ENCODE measurements at regions of chr19 and their contacts with region 1.

Region 1: DNA sequence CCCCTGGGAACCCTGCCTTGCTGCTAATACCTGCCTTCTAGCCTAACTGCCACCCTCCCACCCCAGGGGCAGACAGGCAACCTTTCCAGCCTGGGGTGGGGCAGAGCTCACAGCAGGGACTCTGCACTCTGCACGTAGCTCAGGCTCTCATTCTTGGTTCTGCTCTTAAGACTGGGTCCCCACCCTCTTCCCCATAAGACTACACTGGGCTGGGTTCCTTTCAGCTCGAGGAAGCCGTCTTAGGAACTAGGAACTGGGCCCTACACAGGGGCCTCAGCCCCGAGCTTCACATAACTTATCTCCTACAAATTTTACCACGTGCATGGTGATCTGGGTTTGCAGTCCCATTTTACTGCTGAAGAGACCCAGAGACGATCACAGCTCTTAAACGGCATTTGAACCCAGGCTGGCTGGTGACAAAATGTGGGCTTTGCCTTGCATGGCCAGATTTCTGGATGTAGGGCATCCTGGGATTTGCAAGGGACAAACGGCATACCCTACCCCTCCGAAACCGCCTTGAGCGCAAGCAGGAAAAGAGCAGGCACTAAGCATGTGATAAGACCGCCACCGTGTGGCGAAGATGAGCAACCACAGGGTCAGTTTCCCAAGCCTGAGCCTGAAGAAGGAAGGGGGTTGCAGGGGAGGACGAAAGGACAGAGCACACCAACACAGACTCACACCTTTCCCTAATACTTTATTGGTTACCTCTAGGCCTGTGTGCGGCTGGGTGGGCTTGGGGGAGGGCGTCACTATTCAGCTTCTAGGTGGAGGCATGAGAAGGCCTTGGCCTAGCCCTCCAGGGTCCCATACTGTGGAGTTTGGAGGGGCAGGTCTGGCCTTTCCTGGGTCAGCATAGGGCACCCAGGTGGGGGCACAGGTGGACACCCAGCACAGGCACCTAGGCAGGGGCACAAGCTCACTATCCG is 5.1 kb downstream of the JUNB start:
- DNase-seq: peak; percentile 81
- H3K4me3 Mint-ChIP-seq: peak overlapping the region; percentile 64
- H3K27ac Mint-ChIP-seq: peak overlapping the region; percentile 84
- H3K4me1 Mint-ChIP-seq: peaks cover 41% of the 10 kb centered on the region
- H3K27me3 Mint-ChIP-seq: no peaks in the 10 kb centered on the region

Region 2: GRCh38 chr19:12766051-12766521 is 30.3 kb before region 1 on chr19:
- CTCF ChIA-PET with region 1: interaction called, 419 read pairs
- POLR2A ChIA-PET with region 1: interaction called, 574 read pairs
- DNase-seq: peak; percentile 86
- H3K4me3 Mint-ChIP-seq: peak overlapping the region; percentile 24
- H3K27ac Mint-ChIP-seq: no peak overlapping the region
- H3K4me1 Mint-ChIP-seq: peaks cover 16% of the 10 kb centered on the region
- H3K27me3 Mint-ChIP-seq: no peaks in the 10 kb centered on the region

Region 3: DNA sequence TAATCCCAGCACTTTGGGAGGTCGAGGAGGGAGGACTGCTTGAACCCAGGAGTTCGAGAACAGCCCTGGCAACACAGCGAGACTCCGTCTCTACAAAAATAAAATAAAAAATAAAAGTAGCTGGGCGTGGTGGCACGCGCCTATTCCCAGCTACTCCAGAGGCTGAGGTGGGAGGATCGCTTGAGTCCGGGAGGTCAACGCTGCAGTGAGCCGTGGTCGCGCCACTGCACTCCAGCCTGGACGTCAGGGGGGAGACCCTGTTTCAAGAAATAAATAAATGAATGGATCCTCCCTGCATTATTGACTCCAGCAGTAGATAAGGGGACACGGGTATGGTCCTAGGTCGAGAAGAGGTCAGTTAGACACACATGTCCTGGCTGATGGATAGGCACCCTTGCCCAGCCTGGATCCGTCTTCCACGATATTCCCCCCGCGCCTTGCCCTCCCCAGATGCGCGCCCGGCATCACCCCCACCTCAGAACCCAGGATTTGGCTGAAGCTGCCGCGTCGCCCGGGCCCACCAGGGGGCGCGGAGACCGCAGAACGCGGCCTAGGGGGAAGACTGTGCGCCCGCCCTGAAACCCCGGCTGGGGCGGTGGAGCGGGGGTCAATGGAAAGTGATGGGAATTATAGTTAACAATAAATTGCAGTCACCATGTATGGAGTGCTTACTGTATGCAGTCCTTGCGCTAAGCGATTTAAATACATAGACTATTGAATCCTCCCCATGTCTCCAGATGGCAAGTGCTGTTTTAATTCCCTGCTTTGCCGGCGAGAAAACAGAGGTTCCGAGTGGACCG is 19.0 kb before region 1 on chr19:
- CTCF ChIA-PET with region 1: interaction called, 183 read pairs
- POLR2A ChIA-PET with region 1: interaction called, 574 read pairs
- DNase-seq: peak; percentile 85
- H3K4me3 Mint-ChIP-seq: peak overlapping the region; percentile 83
- H3K27ac Mint-ChIP-seq: peak overlapping the region; percentile 92
- H3K4me1 Mint-ChIP-seq: peaks cover 44% of the 10 kb centered on the region
- H3K27me3 Mint-ChIP-seq: no peaks in the 10 kb centered on the region

Region 4: DNA sequence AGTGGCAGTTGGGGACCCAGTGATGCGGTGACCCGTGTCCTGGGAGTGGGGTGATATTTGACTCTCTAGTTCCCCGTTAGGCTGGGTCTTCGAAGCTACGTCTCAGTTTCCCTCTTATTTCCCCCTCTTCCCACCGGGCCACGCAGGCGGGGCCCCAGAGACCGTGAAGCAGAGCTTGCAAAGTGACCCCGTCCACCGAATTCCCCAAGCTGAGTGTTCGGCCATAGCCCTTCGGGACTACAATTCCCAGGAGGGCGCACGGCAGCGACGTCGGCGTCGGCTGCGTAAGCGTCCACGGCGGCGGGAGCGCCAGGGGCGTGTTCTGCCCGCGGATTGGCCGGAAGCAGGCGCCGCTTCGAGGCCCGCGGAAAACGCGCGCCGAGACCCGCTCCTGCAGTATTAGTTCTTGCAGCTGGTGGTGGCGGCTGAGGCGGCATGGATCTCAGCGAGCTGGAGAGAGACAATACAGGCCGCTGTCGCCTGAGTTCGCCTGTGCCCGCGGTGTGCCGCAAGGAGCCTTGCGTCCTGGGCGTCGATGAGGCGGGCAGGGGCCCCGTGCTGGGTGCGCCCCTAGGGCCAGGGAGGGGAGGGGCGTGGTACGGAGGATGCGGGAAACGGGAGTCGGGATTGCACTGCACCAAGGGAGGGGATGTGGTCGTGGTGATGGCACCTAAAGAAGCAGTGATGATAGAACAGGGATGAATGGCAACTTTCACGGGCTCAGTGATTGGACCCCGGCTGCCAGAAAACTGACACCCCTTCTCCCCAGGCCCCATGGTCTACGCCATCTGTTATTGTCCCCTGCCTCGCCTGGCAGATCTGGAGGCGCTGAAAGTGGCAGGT is 10.1 kb after region 1 on chr19 and contains the start of gene RNASEH2A:
- CTCF ChIA-PET with region 1: interaction called, 10 read pairs
- POLR2A ChIA-PET with region 1: interaction called, 59 read pairs
- DNase-seq: peak; percentile 92
- H3K4me3 Mint-ChIP-seq: peak within 1 kb of the TSS; percentile 95
- H3K27ac Mint-ChIP-seq: peak within 1 kb of the TSS; percentile 83
- H3K4me1 Mint-ChIP-seq: peaks cover 32% of the 10 kb centered on the region
- H3K27me3 Mint-ChIP-seq: no peaks in the 10 kb centered on the region
- total RNA-seq, gene RNASEH2A: 34.8 to 38.4 TPM

Measured in activated CD4-positive, alpha-beta memory T cell treated with anti-CD3 and anti-CD28 coated beads, Interleukin-2, amount 10 ng/mL, durations not matched to agents 7 days and 5 days (primary cell).